ENCODE measurements at regions of chr5 and their contacts with region 1.

Region 1: DNA sequence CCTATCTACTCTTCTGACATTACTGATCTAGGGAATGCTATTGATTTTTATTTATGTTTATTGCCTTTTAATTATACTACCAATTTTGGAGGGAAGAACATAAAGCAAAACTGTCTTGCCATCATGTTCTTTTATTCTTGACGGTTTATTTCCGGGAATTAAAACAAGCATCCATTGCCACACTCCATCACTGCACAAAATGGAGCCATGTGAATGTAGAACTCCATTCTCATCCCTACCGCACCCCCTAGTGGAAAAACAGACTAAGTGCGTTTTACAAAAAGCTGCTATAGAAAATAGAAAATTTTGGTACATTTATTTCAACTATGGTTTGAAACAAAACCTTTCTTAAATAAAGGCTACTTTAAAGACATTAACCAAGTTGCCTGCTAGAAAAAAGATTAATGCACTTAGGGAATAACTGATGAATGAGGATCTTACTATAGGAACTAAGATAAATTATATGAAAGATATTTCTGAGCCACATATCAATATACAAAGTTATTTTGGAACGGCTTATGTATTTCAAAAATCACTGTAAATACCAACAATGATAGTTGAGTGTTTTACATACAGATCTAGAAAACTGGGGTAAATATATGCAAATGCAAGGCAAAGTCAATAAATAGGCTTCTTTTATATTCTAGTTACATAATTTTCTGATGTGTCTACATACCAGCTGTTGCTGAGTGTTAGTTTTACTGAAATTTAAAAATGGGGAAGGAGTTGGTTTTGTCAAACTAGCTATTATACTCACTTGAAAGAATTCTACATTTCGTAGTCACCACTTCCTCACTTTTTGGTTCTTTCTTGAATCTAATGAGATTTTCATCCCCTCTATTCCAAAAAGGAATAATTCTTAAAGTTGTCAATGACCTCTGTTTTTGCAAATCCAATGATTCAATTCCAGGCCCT is 26.5 kb downstream of the OXCT1 start:
- DNase-seq: peak; percentile 4 to 70
- ATAC-seq: peak; percentile 82 to 85
- H3K4me3 ChIP-seq: no peak overlapping the region
- H3K27ac ChIP-seq: no peak overlapping the region
- H3K4me1 ChIP-seq: no peaks in the 10 kb centered on the region
- CTCF ChIP-seq: peak; percentile 87
- EP300 ChIP-seq: no peak
- POLR2A ChIP-seq: no peak
- RAD21 ChIP-seq: peak; percentile 92 to 93

Region 2: GRCh38 chr5:40904205-40904993 is 939.3 kb before region 1 on chr5:
- CTCF ChIA-PET with region 1: interaction called, 11 read pairs
- POLR2A ChIA-PET with region 1: no interaction called
- DNase-seq: peak; percentile 58 to 71
- ATAC-seq: peak; percentile 93 to 99
- H3K4me3 ChIP-seq: no peak overlapping the region
- H3K27ac ChIP-seq: no peak overlapping the region
- H3K4me1 ChIP-seq: no peaks in the 10 kb centered on the region
- CTCF ChIP-seq: peak; percentile 85
- EP300 ChIP-seq: no peak
- POLR2A ChIP-seq: no peak
- RAD21 ChIP-seq: peak; percentile 88 to 96

Region 3: DNA sequence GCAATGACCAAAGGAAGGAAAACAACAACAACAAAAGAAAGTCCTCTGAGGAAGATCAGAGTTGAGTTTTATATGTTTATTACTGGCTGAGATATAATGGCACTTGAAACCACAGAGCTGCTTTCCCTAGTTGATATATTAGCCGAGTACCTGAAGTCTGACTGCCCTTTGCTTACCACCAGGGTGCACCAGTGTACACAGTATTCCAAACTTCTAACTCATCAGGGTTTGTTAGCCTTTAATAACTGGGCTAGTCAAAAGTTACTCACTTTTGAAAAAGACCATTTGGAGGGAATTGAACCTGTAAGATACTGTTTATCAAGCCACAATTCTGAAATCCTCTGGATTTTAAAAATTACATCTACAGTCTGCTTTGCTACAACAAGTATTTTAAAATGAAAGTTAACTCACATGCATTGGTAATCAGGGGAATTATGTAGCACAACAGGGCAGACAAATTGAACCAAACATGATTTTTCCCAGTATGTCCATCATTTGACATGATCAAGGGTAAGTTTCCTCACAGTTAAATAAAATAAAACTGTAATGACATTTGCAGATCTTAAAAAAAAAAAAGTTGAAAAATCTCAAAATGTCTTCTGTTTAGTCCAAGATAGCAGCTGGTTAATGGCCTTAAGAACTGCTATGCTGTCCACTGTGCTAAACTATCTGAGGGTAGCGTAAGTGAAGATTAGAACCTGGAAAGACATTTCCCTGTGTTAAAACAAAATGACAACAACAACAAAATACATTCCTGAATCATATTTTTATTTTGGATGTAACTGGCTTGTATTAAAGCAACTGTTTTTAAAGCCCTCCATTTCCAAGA is 573.1 kb before region 1 on chr5:
- CTCF ChIA-PET with region 1: interaction called, 28 read pairs
- POLR2A ChIA-PET with region 1: no interaction called
- DNase-seq: peak; percentile 12 to 66
- ATAC-seq: peak; percentile 90 to 95
- H3K4me3 ChIP-seq: no peak overlapping the region
- H3K27ac ChIP-seq: no peak overlapping the region
- H3K4me1 ChIP-seq: no peaks in the 10 kb centered on the region
- CTCF ChIP-seq: peak; percentile 85
- EP300 ChIP-seq: no peak
- POLR2A ChIP-seq: no peak
- RAD21 ChIP-seq: peak; percentile 92 to 94

Region 4: DNA sequence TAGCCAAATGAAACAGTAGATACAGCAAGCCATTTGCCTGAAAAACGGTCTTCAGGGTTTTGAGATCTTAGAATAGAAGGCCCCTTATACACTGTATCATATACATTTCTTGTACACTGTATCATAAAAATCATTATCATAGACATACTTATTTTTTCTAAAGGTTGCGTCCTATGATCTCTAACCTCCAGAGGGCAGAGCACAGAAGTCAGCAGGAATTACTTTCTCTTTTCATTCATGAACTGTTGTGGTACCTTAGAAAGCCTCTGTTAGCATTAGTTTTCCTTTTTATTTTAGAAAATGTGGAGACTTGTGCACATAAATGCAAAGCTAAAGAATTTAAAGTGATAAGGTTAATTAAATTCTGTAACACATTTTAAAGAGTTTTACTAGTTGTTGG is 88.9 kb before region 1 on chr5:
- CTCF ChIA-PET with region 1: interaction called, 42 read pairs
- POLR2A ChIA-PET with region 1: no interaction called
- DNase-seq: no peak
- ATAC-seq: peak in 1 of 2 experiments; percentile 53; a peak in 1 of 6 replicates
- H3K4me3 ChIP-seq: no peak overlapping the region
- H3K27ac ChIP-seq: no peak overlapping the region
- H3K4me1 ChIP-seq: no peaks in the 10 kb centered on the region
- CTCF ChIP-seq: peak; percentile 39; the same call in 2 of the 3 replicates
- EP300 ChIP-seq: no peak
- POLR2A ChIP-seq: no peak
- RAD21 ChIP-seq: peak; percentile 24 to 27; a peak in 2 of 5 replicates

Region 5: GRCh38 chr5:41831155-41831554 is 12.6 kb before region 1 on chr5:
- CTCF ChIA-PET with region 1: interaction called, 11 read pairs
- POLR2A ChIA-PET with region 1: no interaction called
- DNase-seq: no peak
- ATAC-seq: no peak
- H3K4me3 ChIP-seq: no peak overlapping the region
- H3K27ac ChIP-seq: no peak overlapping the region
- H3K4me1 ChIP-seq: peaks cover 9% of the 10 kb centered on the region; the same call in 1 of the 3 replicates
- CTCF ChIP-seq: no peak
- EP300 ChIP-seq: no peak
- POLR2A ChIP-seq: no peak
- RAD21 ChIP-seq: no peak

Region 6: DNA sequence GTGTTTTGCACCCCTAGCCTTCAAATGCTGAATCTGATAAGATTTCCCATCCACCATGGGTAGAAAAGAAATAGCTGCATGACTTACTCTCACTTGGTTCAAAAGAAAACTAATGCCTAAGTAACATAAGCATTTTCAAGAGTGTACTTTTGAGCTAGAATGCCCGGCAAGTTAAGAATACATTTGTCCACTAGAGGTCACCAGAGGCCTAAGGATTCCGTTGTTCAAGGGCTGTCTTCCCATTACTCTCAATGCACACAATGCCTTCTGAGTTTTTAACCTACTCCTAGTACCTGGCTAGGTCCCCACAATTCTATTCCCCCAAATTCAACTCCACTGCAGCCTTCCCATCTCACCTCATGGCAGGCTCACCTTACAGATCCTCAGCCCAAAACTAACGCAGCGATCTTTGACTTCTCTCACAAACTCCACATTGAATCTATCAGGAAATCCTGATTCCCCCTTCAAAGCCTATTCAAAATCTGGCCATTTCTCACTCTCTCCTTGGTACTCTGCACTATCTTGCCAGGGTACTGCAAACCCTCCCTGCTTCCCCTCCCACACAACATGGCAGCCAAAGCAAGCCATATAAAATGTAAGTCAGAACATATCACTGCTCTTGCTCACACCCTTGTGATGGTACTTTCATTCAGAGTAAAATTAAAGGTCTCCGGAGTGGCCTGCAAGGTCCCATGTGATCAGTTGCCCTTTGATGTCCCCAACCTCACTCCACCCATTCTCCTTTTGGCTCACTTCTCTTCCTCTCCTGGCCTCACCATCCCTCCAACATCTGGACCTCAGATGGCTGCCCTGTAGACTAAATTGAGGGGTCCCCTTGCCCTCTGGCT is 13.2 kb after region 1 on chr5:
- CTCF ChIA-PET with region 1: interaction called, 10 read pairs
- POLR2A ChIA-PET with region 1: no interaction called
- DNase-seq: peak; percentile 42 to 69
- ATAC-seq: peak; percentile 86 to 97
- H3K4me3 ChIP-seq: no peak overlapping the region
- H3K27ac ChIP-seq: no peak overlapping the region
- H3K4me1 ChIP-seq: no peaks in the 10 kb centered on the region
- CTCF ChIP-seq: peak; percentile 86
- EP300 ChIP-seq: no peak
- POLR2A ChIP-seq: no peak
- RAD21 ChIP-seq: peak; percentile 86 to 92